ENCODE measurements at regions of chr20 and their contacts with region 1.

Region 1: DNA sequence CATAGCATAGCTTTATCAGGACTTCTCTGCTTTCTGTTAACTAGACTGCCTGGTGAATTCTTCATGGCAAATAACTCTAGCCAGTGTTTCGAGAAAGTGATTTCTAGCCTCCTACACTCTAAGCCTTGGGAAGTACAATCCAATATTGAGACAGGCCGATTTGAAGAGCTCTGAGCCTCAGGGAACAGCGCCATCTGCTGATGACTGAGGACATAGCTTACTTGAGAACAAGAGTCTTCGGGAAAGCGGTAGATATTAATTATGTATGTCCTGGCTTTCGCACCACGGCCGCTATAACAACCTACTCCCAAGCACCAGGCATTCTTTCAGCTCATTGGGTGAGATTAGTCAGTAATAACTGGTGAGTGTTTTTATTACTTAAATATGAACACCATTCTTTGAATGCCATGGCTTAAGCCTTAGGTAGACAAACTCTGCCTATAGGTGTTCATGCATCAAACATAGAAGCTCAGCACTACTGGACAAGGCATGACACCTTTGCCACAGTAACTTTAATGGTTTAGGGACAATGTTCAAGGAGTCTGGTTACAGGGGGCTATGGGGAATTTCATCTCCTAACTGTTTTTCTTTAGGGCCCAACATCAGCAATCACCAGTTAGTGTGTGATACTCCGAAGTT is 518.6 kb downstream of the BMP2 start:
- DNase-seq: peak; percentile 76
- ATAC-seq: peak; percentile 89
- H3K4me3 ChIP-seq: no peak overlapping the region
- H3K27ac ChIP-seq: no peak overlapping the region
- H3K4me1 ChIP-seq: no peaks in the 10 kb centered on the region
- H3K27me3 ChIP-seq: peaks cover 2% of the 10 kb centered on the region; the same call in 1 of the 2 replicates
- CTCF ChIP-seq: peak; percentile 86

Region 2: DNA sequence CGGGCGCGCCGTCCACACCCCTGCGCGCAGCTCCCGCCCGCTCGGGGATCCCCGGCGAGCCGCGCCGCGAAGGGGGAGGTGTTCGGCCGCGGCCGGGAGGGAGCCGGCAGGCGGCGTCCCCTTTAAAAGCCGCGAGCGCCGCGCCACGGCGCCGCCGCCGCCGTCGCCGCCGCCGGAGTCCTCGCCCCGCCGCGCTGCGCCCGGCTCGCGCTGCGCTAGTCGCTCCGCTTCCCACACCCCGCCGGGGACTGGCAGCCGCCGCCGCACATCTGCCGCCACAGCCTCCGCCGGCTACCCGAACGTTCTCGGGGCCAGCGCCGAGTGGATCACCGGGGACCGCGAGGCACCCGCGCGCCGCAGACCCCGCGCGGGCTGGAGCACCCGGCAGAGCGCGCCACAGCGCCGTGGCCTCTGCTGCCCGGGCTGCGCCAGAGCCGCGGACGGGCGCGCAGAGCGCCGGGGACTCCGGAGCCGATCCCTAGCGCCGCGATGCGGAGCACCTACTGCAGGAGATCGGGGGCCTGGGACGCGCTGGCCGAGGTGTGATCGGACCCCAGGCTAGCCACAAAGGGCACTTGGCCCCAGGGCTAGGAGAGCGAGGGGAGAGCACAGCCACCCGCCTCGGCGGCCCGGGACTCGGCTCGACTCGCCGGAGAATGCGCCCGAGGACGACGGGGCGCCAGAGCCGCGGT is 518.4 kb before region 1 on chr20 and contains the start of gene BMP2:
- CTCF ChIA-PET with region 1: interaction called, 4 read pairs
- POLR2A ChIA-PET with region 1: no interaction called
- in situ Hi-C with region 1: no loop called
- intact Hi-C with region 1: loop called (anchors 1 kb)
- DNase-seq: no peak
- ATAC-seq: peak; percentile 86
- H3K4me3 ChIP-seq: peak within 1 kb of the TSS; percentile 44 to 54
- H3K27ac ChIP-seq: no peak within 1 kb of the TSS
- H3K4me1 ChIP-seq: no peaks in the 10 kb centered on the region
- H3K27me3 ChIP-seq: peaks cover 10% of the 10 kb centered on the region
- CTCF ChIP-seq: peak; percentile 42
- total RNA-seq, gene BMP2: 0.23 TPM

Region 3: DNA sequence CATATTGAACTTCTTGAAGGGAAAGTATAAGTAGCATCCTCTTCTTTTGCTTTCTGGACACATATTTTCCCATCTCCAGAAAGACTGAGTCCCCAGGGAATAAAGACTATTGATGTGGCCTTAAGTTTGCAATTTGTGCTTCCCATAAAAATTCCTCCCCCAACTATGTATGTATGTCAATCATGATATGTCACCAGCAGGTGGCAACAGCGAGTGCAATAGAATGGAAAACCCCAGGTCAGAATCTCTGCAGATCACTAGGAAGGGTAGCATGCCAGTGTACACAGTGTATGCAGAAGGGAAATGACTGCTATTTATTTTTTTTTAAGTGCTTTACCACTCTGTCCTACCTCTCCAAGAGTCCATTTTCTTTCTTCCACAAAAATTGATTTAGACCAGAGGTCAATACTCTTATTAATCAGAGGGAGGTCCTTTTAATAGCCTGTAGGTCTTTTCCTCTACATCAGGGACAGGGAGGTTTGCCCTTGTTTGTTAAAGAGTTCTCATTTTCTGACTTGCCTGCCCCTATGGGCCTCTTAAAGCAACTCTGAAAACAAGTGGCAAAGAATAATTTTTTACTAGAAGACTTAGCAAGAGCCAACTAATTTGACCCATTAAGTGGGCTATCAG is 457.1 kb before region 1 on chr20:
- CTCF ChIA-PET with region 1: no interaction called
- POLR2A ChIA-PET with region 1: no interaction called
- in situ Hi-C with region 1: no loop called
- intact Hi-C with region 1: loop called (anchors 10 kb)
- DNase-seq: peak; percentile 42
- ATAC-seq: peak; percentile 88
- H3K4me3 ChIP-seq: no peak overlapping the region
- H3K27ac ChIP-seq: no peak overlapping the region
- H3K4me1 ChIP-seq: no peaks in the 10 kb centered on the region
- H3K27me3 ChIP-seq: no peaks in the 10 kb centered on the region
- CTCF ChIP-seq: peak; percentile 73

Region 4: GRCh38 chr20:7057611-7058010 is 228.4 kb before region 1 on chr20:
- CTCF ChIA-PET with region 1: no interaction called
- POLR2A ChIA-PET with region 1: no interaction called
- in situ Hi-C with region 1: no loop called
- intact Hi-C with region 1: no loop called
- DNase-seq: no peak
- ATAC-seq: no peak
- H3K4me3 ChIP-seq: no peak overlapping the region
- H3K27ac ChIP-seq: no peak overlapping the region
- H3K4me1 ChIP-seq: no peaks in the 10 kb centered on the region
- H3K27me3 ChIP-seq: no peaks in the 10 kb centered on the region
- CTCF ChIP-seq: no peak

Region 5: DNA sequence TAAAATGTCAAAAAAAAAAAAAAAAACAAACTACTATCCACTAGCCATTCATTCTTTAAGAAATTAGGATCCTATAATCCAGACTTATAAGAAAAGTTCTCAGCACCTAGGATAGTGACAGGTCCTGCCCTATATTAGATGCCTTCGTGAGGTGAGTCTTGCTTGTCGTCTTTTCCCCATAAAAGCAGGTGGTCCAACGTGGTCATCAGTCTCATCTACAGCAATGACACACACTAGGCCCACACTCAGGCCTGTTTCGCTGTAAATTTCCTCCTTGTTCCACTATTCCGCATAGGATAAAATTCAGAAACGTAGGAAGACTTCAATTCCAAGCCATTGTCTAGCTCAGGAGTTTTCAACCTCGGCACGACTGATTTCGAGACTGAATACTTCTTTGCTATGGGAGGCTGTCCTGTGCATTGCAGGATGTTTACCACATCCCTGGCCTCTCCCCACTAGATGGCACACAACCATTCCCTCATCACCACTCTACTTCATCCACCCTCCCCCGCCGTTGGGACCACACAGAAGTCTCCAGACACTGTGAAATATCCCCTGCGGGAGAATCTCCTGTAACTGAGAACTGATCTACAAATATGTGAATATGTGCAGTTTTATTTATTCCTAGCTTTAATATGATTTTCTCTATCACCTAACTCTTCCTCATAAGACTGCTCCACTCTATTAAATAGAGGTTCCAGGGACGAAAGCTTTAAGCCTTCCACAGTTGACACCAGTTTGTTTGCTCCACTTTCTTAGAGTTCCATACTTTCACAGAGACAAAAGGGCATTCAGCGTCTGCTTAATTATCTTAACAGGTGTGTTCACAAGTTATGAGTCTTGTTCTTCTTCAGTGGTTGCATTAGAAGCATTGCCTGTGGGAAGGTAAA is 172.2 kb before region 1 on chr20:
- CTCF ChIA-PET with region 1: interaction called, 3 read pairs
- POLR2A ChIA-PET with region 1: no interaction called
- in situ Hi-C with region 1: no loop called
- intact Hi-C with region 1: loop called (anchors 10 kb)
- DNase-seq: peak; percentile 18
- ATAC-seq: peak; percentile 81
- H3K4me3 ChIP-seq: no peak overlapping the region
- H3K27ac ChIP-seq: no peak overlapping the region
- H3K4me1 ChIP-seq: no peaks in the 10 kb centered on the region
- H3K27me3 ChIP-seq: no peaks in the 10 kb centered on the region
- CTCF ChIP-seq: peak; percentile 61

Region 6: GRCh38 chr20:7333841-7334240 is 47.8 kb after region 1 on chr20:
- CTCF ChIA-PET with region 1: no interaction called
- POLR2A ChIA-PET with region 1: no interaction called
- in situ Hi-C with region 1: no loop called
- intact Hi-C with region 1: no loop called
- DNase-seq: no peak
- ATAC-seq: no peak
- H3K4me3 ChIP-seq: no peak overlapping the region
- H3K27ac ChIP-seq: no peak overlapping the region
- H3K4me1 ChIP-seq: no peaks in the 10 kb centered on the region
- H3K27me3 ChIP-seq: no peaks in the 10 kb centered on the region
- CTCF ChIP-seq: no peak

Region 7: GRCh38 chr20:7470912-7471311 is 184.9 kb after region 1 on chr20:
- CTCF ChIA-PET with region 1: no interaction called
- POLR2A ChIA-PET with region 1: no interaction called
- in situ Hi-C with region 1: no loop called
- intact Hi-C with region 1: no loop called
- DNase-seq: no peak
- ATAC-seq: no peak
- H3K4me3 ChIP-seq: no peak overlapping the region
- H3K27ac ChIP-seq: no peak overlapping the region
- H3K4me1 ChIP-seq: no peaks in the 10 kb centered on the region
- H3K27me3 ChIP-seq: no peaks in the 10 kb centered on the region
- CTCF ChIP-seq: no peak

Region 8: GRCh38 chr20:7859356-7859802 is 573.3 kb after region 1 on chr20:
- CTCF ChIA-PET with region 1: no interaction called
- POLR2A ChIA-PET with region 1: no interaction called
- in situ Hi-C with region 1: no loop called
- intact Hi-C with region 1: loop called (anchors 5 kb)
- DNase-seq: peak; percentile 43
- ATAC-seq: peak; percentile 62; the same call in 1 of the 2 replicates
- H3K4me3 ChIP-seq: no peak overlapping the region
- H3K27ac ChIP-seq: no peak overlapping the region
- H3K4me1 ChIP-seq: no peaks in the 10 kb centered on the region
- H3K27me3 ChIP-seq: no peaks in the 10 kb centered on the region
- CTCF ChIP-seq: peak; percentile 66; the same call in 1 of the 2 replicates

Measured in Panc1 (cell line).